ENCODE measurements at regions of chr2 and their contacts with region 1.

Region 1: GRCh38 chr2:56132138-56132537 is 51.7 kb upstream of the CCDC85A start:
- DNase-seq: peak in 1 of 2 experiments; percentile 50
- H3K4me3 ChIP-seq: no peak overlapping the region
- H3K27ac ChIP-seq: no peak overlapping the region
- H3K4me1 ChIP-seq: no peaks in the 10 kb centered on the region
- H3K27me3 ChIP-seq: peaks cover 15% of the 10 kb centered on the region
- CTCF ChIP-seq: peak; percentile 75

Region 2: DNA sequence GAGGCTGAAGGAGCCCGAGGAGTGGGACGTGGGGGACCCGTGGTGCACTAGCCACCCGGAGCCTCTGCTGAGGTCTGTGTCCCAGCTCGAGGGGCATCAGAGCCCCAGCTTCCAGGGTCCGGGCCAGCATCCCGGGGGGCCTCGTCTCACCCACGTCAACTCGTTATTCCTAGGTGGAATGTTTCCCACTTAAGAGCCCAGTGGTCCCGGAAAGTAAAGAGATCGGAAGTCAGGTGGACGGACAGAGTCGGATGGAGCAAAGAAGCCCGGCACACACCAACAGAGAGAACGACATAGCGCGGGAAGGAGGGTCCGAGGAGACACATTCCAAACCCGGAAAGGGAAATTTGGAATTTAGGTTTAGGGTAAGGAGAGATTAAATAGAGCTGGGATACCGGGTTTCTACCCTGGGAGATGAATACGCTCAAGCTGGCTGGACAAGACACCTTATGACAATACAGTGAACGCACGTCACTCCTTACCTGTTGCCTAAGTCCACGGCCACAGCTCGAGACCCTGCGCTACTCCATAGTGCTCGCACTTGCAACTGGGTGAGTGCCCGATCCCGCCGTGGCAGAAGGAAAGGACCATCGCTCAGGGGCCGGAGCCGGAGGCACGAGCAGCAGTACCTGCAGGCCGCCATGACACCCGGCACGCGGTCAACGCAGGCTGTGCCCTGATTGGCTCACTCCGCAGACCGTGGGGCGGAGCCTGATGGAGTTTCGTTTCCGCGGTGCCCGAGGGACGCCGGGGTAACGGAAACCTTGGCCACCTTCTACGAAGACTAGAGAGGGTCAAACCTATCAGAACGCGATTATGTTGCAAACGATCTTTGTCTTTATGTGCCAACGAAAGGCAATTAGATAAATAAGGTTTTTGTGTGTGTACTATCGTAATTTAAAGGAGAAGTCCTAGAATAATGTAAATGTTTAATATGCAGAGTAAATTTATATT is 438.7 kb before region 1 on chr2 and contains the start of gene PNPT1:
- CTCF ChIA-PET with region 1: no interaction called
- POLR2A ChIA-PET with region 1: no interaction called
- intact Hi-C with region 1: loop called (anchors 2 kb)
- DNase-seq: peak; percentile 89 to 94
- H3K4me3 ChIP-seq: peak within 1 kb of the TSS; percentile 87
- H3K27ac ChIP-seq: peak within 1 kb of the TSS; percentile 32
- H3K4me1 ChIP-seq: peaks cover 15% of the 10 kb centered on the region
- H3K27me3 ChIP-seq: no peaks in the 10 kb centered on the region
- CTCF ChIP-seq: no peak
- total RNA-seq, gene PNPT1: 23.1 and 34.1 TPM in 2 replicates

Region 3: DNA sequence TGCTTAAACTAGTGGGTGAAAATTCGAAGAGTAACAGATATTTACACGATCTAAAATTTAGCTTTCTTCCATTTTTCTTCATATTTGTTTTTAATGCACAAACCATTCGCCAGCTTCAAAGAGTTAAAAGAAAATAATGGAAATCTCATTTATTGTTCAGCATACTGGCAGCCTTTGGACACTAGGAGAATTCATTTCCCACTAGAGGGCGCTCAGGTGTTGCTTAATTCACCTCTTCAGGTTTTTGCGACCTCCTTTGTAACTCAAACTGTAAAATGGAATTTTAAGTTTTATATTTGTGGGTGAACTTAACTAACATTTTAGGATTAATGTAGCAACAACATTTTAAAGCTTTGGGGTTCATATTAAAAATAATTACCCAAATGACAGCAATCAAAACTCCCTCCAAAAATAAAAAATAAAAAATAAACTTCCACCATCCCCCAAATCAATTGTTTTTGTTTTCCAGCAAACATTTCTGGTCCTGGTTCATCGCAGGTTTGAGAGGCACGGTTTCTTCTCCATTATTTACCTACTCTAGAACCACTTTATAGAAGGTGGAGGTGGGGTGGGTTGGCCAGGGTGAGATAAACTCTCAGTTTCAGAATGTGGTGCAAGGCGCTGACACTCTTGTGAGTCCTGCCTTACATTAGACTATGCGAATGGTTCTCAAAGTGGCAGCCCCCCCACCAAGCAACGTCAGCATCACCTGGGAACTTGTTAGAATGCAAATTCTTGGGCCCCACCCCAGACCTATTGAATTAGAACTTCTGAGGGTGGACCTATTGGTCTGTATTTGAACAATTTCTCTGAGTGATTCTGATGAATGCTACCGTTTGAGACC is 413.8 kb before region 1 on chr2:
- CTCF ChIA-PET with region 1: no interaction called
- POLR2A ChIA-PET with region 1: no interaction called
- intact Hi-C with region 1: loop called (anchors 1 kb)
- DNase-seq: peak; percentile 53 to 58
- H3K4me3 ChIP-seq: no peak overlapping the region
- H3K27ac ChIP-seq: no peak overlapping the region
- H3K4me1 ChIP-seq: peaks cover 17% of the 10 kb centered on the region
- H3K27me3 ChIP-seq: no peaks in the 10 kb centered on the region
- CTCF ChIP-seq: peak; percentile 97

Region 4: DNA sequence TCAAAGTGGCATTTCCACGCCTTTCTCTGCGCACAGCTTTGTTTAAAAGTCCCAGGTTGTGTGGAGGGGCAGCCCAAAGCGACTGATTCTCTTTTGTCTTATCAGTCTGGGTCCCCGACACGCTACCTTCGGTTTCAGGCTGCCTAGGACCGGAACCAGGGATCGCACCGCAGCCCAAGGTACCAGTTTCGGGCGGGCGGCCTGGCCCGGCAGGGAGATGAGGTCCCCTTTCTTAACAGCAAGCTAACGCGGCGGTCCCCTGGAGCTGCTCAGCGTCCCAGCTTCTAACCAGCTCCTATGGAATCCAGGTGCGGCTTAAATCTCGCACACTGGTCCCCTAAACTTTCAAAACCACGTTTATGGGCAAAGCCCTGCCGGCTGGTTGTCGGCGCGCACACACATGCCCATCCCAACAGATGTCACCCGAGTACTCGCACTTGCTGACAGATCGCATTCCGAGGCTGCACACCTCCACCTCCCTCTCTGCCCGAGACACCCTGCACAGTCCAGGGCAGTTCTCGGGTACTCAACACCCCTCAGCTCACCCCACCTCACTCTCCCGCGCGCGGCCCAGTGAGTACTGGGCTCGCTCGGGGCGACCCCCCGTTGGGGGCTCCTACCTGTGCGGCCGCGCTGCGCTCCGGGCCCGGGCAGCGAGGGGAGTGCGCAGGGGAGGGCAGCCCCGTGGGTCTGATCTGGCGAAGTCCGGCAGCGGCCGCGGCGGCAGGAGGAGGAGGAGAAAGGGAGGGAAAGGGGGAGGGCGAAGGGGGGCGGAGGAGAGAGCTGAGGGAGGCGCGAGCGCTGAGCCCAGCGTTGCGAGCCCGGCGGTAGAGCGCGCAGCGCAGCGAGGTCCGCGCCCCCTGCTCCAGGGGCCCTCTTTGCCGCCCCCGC is 208.8 kb before region 1 on chr2 and contains the start of gene EFEMP1:
- CTCF ChIA-PET with region 1: no interaction called
- POLR2A ChIA-PET with region 1: no interaction called
- intact Hi-C with region 1: no loop called
- DNase-seq: peak; percentile 56 to 80
- H3K4me3 ChIP-seq: peak within 1 kb of the TSS; percentile 62
- H3K27ac ChIP-seq: no peak within 1 kb of the TSS
- H3K4me1 ChIP-seq: peaks cover 6% of the 10 kb centered on the region; the same call in 1 of the 2 replicates
- H3K27me3 ChIP-seq: peaks cover 22% of the 10 kb centered on the region; the same call in 1 of the 2 replicates
- CTCF ChIP-seq: no peak
- total RNA-seq, gene EFEMP1: 61.3 and 86.3 TPM in 2 replicates

Region 5: DNA sequence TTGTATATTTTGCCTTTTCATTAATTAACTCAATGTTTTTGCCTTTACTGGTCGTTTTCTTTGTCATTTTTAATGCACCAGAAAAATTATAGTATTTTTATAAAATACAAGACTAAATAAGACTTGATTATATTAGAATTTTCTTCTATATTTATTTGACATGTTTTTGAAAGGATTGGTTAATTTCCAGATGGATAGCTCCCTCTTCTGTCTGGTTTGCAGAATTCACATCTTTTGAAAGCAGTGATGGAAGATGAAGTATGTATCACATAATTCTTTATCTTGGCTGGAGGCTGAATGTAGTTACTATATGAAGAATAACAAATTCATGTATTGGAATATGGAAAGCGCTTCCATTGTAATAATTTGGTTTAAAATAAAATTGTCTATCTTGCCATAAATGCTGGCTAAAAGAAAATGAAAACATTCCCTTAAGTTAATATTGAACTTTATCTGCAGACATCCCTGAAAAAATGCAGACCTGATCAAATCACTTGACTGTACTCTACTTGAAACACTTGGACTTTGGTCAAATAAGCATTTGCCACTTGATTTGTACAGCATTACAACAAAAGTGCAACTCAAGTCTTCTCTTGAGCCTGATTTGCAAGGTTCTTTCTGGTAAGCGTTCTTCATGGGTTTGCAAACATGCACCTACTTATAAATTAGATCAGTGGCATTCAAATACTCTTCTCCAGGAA is 122.2 kb before region 1 on chr2:
- CTCF ChIA-PET with region 1: no interaction called
- POLR2A ChIA-PET with region 1: no interaction called
- intact Hi-C with region 1: loop called (anchors 5 kb)
- DNase-seq: peak in 1 of 2 experiments; percentile 63
- H3K4me3 ChIP-seq: no peak overlapping the region
- H3K27ac ChIP-seq: no peak overlapping the region
- H3K4me1 ChIP-seq: no peaks in the 10 kb centered on the region
- H3K27me3 ChIP-seq: no peaks in the 10 kb centered on the region
- CTCF ChIP-seq: peak; percentile 89

Region 6: DNA sequence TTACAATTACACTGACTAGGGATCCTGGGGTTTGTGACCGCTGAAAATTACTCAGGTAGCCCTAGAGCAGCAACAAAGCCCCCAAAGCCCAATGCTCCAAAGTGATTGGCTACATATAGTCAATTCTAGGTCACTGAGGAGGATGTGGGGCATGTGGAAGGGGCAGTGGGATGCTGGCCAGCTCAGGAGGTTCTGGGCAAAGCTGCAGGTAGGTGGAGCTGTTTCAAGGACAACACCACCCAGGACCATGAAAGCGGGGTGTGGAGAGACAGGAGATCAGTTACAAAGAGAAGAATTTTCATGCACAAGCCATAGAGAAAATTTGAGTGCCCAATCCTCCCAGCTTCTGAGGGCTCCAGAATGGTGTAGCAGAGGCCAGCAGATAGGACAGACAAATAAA is 23.3 kb before region 1 on chr2:
- CTCF ChIA-PET with region 1: interaction called, 12 read pairs
- POLR2A ChIA-PET with region 1: no interaction called
- intact Hi-C with region 1: no loop called
- DNase-seq: no peak
- H3K4me3 ChIP-seq: no peak overlapping the region
- H3K27ac ChIP-seq: no peak overlapping the region
- H3K4me1 ChIP-seq: no peaks in the 10 kb centered on the region
- H3K27me3 ChIP-seq: 0 out of 2 replicates have a peak, but pooled peaks cover 2% of the 10 kb centered on the region
- CTCF ChIP-seq: no peak

Region 7: DNA sequence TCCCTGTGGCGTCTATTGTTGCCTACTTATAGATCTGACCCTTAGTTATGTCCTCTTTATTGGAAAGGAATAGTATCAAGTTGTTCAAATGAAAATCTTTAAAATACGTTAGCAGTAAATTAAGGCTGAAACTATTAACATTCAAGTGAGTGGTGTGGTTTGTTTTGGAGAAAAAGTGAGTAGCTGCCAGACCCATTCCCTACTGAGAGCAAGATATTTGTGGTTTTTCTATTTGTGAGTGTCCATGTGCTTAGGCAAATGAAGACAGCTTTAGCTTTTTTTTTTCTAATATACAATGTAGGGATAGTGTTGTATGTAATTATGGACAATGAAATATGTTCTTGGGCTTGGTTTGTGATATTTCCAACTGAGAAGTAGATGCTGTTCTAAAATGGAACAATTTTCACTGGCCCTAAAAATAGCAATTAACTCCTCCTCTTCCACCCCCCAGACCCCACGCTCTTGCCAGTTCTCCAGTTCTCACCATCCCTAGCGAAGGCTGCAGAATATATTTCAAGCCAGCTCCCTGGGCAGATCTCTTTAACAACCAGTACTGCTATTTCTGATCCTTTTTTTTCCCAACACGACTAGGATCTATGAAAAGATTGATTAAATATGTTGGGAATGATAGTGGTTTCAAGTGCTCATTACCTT is 134.8 kb after region 1 on chr2:
- CTCF ChIA-PET with region 1: no interaction called
- POLR2A ChIA-PET with region 1: no interaction called
- intact Hi-C with region 1: no loop called
- DNase-seq: no peak
- H3K4me3 ChIP-seq: no peak overlapping the region
- H3K27ac ChIP-seq: no peak overlapping the region
- H3K4me1 ChIP-seq: no peaks in the 10 kb centered on the region
- H3K27me3 ChIP-seq: no peaks in the 10 kb centered on the region
- CTCF ChIP-seq: no peak